ENCODE measurements at regions of chr2 and their contacts with region 1.

Region 1: DNA sequence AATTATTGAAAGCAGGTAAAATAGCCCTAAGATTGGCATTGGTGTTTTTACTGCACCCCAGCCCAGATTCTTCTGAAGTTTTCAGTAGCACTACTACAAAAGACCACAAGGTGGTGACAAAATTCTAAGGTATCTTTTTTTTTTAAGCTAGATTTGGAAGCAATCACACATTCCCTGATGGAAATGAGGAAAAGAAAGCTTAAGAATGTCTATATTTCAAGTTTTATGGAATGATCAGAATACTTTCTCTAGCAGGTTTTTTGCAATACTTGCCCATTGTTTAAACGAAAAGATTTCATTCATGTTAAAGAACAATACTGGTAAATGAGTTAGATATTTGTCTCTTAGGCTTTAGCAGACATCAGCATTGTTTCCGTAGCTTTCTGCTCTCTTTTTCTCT is 32.1 kb upstream of the ZNF638 start:
- DNase-seq: peak in 3 of 14 experiments; percentile 34 to 66 (median 58)
- ATAC-seq: no peak
- H3K4me3 ChIP-seq: no peak overlapping the region
- H3K4me3 Mint-ChIP-seq: no peak overlapping the region
- H3K27ac ChIP-seq: no peak overlapping the region
- H3K27ac Mint-ChIP-seq: no peak overlapping the region
- H3K4me1 ChIP-seq: no peaks in the 10 kb centered on the region
- H3K4me1 Mint-ChIP-seq: no peaks in the 10 kb centered on the region
- H3K27me3 ChIP-seq: peaks cover 0 to 2% of the 10 kb centered on the region in 2 experiments
- H3K27me3 Mint-ChIP-seq: peaks cover 11% of the 10 kb centered on the region
- CTCF ChIP-seq: peak; percentile 89

Region 2: DNA sequence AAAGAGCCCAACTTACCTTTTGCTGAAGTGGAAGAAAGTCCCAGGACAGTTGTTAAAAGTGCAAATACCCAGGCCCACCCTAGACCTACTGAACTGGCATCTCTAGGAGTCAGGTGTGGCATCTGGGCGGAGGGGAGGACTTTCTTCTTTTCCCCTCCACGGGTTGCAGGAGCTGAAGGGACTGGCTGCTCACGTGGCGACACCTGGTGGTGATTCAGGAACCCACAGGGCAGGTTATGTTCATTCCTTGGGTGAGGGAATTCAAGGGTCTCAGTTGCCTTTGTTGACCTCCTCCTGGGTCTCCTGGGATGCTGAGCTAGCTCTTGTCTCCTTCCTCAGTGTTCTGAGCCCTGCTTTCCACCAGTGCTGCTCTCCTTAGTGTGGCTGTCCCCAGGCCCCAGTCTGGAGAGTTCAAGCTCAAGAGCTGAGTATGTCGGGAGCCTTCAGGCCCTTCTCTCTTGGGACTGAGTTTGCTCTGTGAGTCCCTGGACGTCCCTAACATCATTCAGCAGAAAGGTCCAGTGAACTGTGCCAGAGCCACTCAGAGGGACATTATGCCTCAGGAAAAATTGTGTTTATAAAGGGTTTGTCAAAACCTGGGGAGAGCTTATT is 210.8 kb after region 1 on chr2:
- CTCF ChIA-PET with region 1: interaction called, 90 read pairs
- POLR2A ChIA-PET with region 1: interaction called, 16 read pairs
- intact Hi-C with region 1: loop called (anchors 1 kb)
- DNase-seq: peak; percentile 55 to 82 (median 64)
- ATAC-seq: peak; percentile 62
- H3K4me3 ChIP-seq: no peak overlapping the region
- H3K4me3 Mint-ChIP-seq: no peak overlapping the region
- H3K27ac ChIP-seq: no peak overlapping the region
- H3K27ac Mint-ChIP-seq: no peak overlapping the region
- H3K4me1 ChIP-seq: no peaks in the 10 kb centered on the region
- H3K4me1 Mint-ChIP-seq: no peaks in the 10 kb centered on the region
- H3K27me3 ChIP-seq: no peaks in the 10 kb centered on the region
- H3K27me3 Mint-ChIP-seq: no peaks in the 10 kb centered on the region
- CTCF ChIP-seq: peak; percentile 88

Region 3: GRCh38 chr2:72137498-72138010 is 838.0 kb after region 1 on chr2:
- CTCF ChIA-PET with region 1: no interaction called
- POLR2A ChIA-PET with region 1: no interaction called
- intact Hi-C with region 1: loop called in 1 of 2 experiments (anchors 5 kb)
- DNase-seq: peak in 13 of 14 experiments; percentile 28 to 70 (median 47)
- ATAC-seq: peak; percentile 71
- H3K4me3 ChIP-seq: no peak overlapping the region
- H3K4me3 Mint-ChIP-seq: no peak overlapping the region
- H3K27ac ChIP-seq: no peak overlapping the region
- H3K27ac Mint-ChIP-seq: no peak overlapping the region
- H3K4me1 ChIP-seq: peaks cover 5% of the 10 kb centered on the region
- H3K4me1 Mint-ChIP-seq: peaks cover 4% of the 10 kb centered on the region
- H3K27me3 ChIP-seq: peaks cover 1 to 5% of the 10 kb centered on the region in 2 experiments
- H3K27me3 Mint-ChIP-seq: peaks cover 19% of the 10 kb centered on the region
- CTCF ChIP-seq: peak; percentile 84

Region 4: GRCh38 chr2:72745679-72746368 is 1446.3 kb after region 1 on chr2:
- CTCF ChIA-PET with region 1: interaction called, 3 read pairs
- POLR2A ChIA-PET with region 1: no interaction called
- intact Hi-C with region 1: loop called in 1 of 2 experiments (anchors 5 kb)
- DNase-seq: peak in 3 of 14 experiments; percentile 38 to 56 (median 50)
- ATAC-seq: no peak
- H3K4me3 ChIP-seq: no peak overlapping the region
- H3K4me3 Mint-ChIP-seq: no peak overlapping the region
- H3K27ac ChIP-seq: no peak overlapping the region
- H3K27ac Mint-ChIP-seq: no peak overlapping the region
- H3K4me1 ChIP-seq: no peaks in the 10 kb centered on the region
- H3K4me1 Mint-ChIP-seq: no peaks in the 10 kb centered on the region
- H3K27me3 ChIP-seq: no peaks in the 10 kb centered on the region
- H3K27me3 Mint-ChIP-seq: no peaks in the 10 kb centered on the region
- CTCF ChIP-seq: peak; percentile 75